Activated CD4-positive, alpha-beta T cell treated with anti-CD3 and anti-CD28 coated beads, Interleukin-2, amount 10 ng/mL, durations not matched to agents 7 days and 5 days (primary cell): ENCODE measurements at regions of chr7 and their contacts with region 1.

Region 1: GRCh38 chr7:24819916-24820689 is 62.8 kb upstream of the GSDME start:
- DNase-seq: peak; percentile 86
- H3K4me3 Mint-ChIP-seq: peak overlapping the region; percentile 74
- H3K27ac Mint-ChIP-seq: peak overlapping the region; percentile 97
- H3K4me1 Mint-ChIP-seq: peaks cover 56% of the 10 kb centered on the region
- H3K27me3 Mint-ChIP-seq: no peaks in the 10 kb centered on the region

Region 2: DNA sequence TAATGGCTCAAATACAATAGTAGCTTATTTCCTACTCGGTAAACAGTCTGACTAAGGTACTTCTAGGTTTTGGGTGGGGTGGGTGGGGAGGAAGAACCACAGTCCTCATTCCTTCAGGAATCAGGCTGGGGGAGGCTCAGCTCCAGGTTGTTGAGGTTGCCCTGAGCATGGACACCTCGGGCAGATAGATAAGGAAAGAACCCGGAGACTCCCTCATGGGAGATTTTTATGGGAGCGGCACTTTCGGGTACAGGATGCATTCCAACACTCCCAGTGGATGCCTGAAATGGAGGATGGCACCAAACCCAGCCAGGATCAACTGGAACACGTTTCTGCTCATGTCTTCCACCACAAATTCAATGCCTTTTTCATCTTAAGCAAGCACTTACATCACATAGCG is 57.3 kb before region 1 on chr7:
- CTCF ChIA-PET with region 1: no interaction called
- POLR2A ChIA-PET with region 1: no interaction called
- DNase-seq: no peak
- H3K4me3 Mint-ChIP-seq: no peak overlapping the region
- H3K27ac Mint-ChIP-seq: no peak overlapping the region
- H3K4me1 Mint-ChIP-seq: peaks cover 7% of the 10 kb centered on the region
- H3K27me3 Mint-ChIP-seq: peaks cover 66% of the 10 kb centered on the region

Region 3: DNA sequence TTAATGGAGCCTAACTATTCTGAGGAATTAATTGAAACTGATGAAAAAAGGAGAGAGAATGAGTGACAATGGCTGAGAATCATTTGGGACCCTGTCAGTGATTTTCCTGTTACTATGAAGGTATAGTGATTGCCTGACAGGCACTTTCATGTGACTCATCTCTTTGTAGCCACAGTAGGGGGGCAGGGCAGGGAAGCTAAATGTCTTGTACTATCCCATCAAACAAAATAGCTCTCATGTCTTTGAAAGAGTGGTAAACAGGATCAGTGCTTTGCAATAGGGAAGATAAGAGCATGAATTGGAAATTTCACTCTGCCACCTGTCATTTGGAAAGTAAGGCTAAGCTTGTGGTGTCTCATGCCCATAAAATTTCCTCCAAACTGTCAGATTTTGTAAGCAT is 31.7 kb after region 1 on chr7:
- CTCF ChIA-PET with region 1: no interaction called
- POLR2A ChIA-PET with region 1: no interaction called
- DNase-seq: no peak
- H3K4me3 Mint-ChIP-seq: no peak overlapping the region
- H3K27ac Mint-ChIP-seq: no peak overlapping the region
- H3K4me1 Mint-ChIP-seq: peaks cover 15% of the 10 kb centered on the region
- H3K27me3 Mint-ChIP-seq: no peaks in the 10 kb centered on the region

Region 4: DNA sequence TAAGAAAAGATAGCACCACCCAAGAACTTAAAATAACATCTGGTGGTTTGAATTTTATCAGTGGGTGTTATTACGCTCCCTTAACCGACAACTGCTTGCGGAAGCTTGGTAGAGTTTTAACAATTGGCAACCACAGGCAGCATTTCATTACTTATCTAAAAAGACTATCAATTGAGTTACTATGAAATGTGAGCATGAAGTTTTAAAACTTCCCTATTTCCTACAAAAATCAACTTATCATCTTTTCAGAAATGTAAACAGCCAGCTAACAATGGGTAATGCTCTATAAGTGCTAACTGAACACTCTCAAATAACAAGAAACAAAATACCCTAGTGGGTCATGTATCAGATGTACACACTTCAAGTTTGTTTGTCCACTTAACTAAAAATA is 91.1 kb after region 1 on chr7:
- CTCF ChIA-PET with region 1: interaction called, 12 read pairs
- POLR2A ChIA-PET with region 1: no interaction called
- DNase-seq: peak; percentile 55
- H3K4me3 Mint-ChIP-seq: peak overlapping the region; percentile 68
- H3K27ac Mint-ChIP-seq: peak overlapping the region; percentile 91
- H3K4me1 Mint-ChIP-seq: peaks cover 62% of the 10 kb centered on the region
- H3K27me3 Mint-ChIP-seq: no peaks in the 10 kb centered on the region

Region 5: GRCh38 chr7:25093268-25093826 is 273.2 kb after region 1 on chr7:
- CTCF ChIA-PET with region 1: interaction called, 17 read pairs
- POLR2A ChIA-PET with region 1: no interaction called
- DNase-seq: peak; percentile 82
- H3K4me3 Mint-ChIP-seq: no peak overlapping the region
- H3K27ac Mint-ChIP-seq: no peak overlapping the region
- H3K4me1 Mint-ChIP-seq: peaks cover 12% of the 10 kb centered on the region
- H3K27me3 Mint-ChIP-seq: peaks cover 9% of the 10 kb centered on the region